Transverse colon (tissue), 4 donors: ENCODE measurements at regions of chr17 and their contacts with region 1.

Region 1: GRCh38 chr17:78360371-78361224 is 721 bp upstream of the SOCS3 start:
- DNase-seq: peak; percentile 97
- H3K4me3 ChIP-seq: peak overlapping the region; percentile 49 to 82 (median 78)
- H3K27ac ChIP-seq: peak overlapping the region; percentile 87 to 98 (median 96)
- H3K4me1 ChIP-seq: peaks cover 19 to 44% (median 33%) of the 10 kb centered on the region in 4 donors
- H3K27me3 ChIP-seq: no peaks in the 10 kb centered on the region
- CTCF ChIP-seq: peak; percentile 92 to 98 (median 96)
- EP300 ChIP-seq: no peak
- POLR2A ChIP-seq: no peak

Region 2: DNA sequence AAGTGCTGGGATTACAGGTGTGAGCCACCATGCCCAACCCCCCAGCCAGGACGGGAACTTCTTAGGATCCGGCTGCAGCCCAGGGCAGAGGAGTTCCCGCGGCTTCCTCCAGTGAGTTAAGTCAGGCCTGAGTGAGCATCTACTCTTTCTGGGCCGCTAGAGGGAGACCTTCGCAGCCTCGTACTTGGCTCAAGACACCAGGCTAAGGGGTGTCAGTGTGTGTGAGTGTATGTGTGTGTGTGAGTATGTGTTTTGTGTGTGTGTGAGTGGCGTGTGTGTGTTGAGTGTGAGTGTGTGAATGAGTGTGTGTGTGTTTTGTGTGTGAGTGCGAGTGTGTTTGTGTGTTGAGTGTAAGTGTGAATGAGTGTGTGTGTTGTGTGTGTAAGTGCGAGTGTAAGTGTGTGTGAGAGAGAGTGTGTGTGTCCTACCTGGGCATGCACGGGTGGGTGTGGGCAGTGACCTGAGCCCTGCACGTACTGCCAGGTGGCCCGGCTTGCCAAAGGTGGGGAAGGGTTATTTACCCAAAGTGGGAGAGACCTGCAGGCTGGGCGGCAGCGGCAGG is 70.7 kb before region 1 on chr17:
- in situ Hi-C with region 1: no loop called
- intact Hi-C with region 1: loop called (anchors 2 kb)
- DNase-seq: peak; percentile 84
- H3K4me3 ChIP-seq: no peak overlapping the region
- H3K27ac ChIP-seq: no peak overlapping the region
- H3K4me1 ChIP-seq: peaks cover 0 to 4% (median 1%) of the 10 kb centered on the region in 4 donors
- H3K27me3 ChIP-seq: no peaks in the 10 kb centered on the region
- CTCF ChIP-seq: peak; percentile 64 to 95 (median 79)
- EP300 ChIP-seq: no peak
- POLR2A ChIP-seq: no peak

Region 3: DNA sequence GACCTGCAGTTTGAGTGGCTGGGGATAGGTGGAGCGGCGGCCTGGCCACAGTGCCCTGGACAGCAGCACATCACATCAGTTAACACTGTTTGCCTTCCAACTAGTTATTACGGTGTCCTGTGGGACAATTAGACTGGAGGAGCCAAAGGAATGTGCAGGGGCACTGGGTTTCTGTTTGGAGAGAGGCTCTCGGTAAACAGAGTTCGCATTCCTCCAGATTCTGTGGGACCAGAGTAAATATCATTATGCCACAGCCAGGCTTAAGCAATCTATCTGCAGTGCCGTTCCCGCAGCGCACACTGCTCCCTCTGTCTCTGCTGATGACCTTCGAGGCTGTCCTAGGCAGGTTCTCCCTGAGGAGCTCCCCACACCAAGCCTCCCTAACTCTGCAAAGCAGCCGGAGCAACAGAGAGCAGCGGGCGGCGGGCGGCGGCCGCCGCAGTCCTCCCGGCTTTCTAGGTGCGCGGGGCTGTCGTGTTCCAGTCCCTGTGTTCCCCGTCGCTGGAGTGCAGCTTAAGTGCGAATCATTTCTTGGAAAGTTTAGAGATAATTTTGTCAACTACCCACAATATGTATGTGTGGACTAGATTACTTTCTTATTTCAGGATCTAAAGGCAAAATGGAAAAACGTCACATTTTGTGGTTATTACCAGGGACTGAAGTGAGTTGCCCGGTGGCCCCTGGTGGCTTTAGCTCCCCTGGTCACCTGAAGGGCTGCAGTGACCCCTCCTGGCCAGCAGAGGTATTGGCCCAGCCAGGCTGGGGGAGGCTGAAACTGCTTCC is 61.1 kb after region 1 on chr17:
- in situ Hi-C with region 1: loop called in 3 of 4 experiments (anchors 5 kb)
- intact Hi-C with region 1: loop called (anchors 1 kb)
- DNase-seq: peak; percentile 84
- H3K4me3 ChIP-seq: no peak overlapping the region
- H3K27ac ChIP-seq: peak overlapping the region in 2 of 4 donors; percentile 2 to 9
- H3K4me1 ChIP-seq: peaks cover 6 to 29% (median 11%) of the 10 kb centered on the region in 4 donors
- H3K27me3 ChIP-seq: no peaks in the 10 kb centered on the region
- CTCF ChIP-seq: peak; percentile 97 to 99 (median 98)
- EP300 ChIP-seq: no peak
- POLR2A ChIP-seq: no peak